ENCODE measurements at regions of chr16 and their contacts with region 1.

Region 1: DNA sequence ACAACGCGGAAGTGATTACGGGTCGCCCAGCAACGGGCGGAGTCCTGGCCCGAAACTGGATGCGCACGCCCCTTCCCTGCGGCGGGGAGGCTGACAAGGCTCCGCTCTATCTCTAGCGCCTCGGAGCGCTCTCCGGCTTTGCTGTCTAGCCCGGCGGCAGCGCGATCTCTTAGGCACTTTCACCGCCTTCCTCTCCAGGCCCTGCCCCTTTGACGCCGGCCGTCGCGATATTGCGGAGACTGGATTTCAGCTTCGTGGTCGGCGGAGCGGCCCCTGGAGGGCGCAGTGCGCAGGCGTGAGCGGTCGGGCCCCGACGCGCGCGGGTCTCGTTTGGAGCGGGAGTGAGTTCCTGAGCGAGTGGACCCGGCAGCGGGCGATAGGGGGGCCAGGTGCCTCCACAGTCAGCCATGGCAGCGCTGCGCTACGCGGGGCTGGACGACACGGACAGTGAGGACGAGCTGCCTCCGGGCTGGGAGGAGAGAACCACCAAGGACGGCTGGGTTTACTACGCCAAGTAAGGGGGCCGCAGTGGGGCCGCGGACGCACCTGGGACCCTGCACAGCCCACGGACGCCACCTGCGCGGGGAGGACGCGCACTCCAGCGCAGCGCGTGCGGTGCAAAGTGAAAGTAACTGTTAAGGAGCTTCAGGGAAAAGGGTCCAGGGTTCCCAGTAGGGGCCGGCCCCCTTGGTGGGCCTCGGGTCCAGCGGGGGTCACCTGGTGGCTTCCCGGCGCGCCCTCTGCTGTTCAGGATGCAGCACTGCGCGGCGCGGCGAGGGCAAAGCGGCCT is at the start of gene WWOX:
- DNase-seq: peak; percentile 99
- H3K4me3 ChIP-seq: peak within 1 kb of the TSS; percentile 90
- H3K27ac ChIP-seq: peak within 1 kb of the TSS; percentile 88
- H3K4me1 ChIP-seq: peaks cover 19% of the 10 kb centered on the region
- H3K27me3 ChIP-seq: no peaks in the 10 kb centered on the region
- CTCF ChIP-seq: peak; percentile 94
- total RNA-seq, gene WWOX: 79.9 and 82.6 TPM in 2 replicates

Region 2: DNA sequence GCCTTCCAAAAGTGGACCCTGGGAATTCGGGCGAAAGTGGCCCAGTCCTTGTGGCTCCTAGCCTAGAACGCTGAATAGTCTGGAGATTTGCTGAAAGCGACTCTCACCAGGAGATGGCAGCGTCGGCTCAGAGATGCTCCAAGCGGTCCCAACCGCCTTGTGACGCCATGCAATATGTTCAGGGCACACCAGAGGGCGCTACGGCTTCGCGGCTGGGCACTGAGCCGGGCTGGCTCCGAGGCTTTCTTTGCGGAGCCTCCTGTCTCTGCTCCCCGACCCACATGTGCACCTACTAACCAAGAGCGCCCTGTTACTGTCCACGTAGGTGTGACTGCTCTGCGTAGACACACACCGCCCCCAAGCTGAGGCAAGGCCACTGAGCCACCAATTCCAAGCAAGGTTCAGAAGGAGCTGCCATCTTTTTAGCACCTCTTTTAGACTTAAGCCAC is 863.5 kb before region 1 on chr16:
- CTCF ChIA-PET with region 1: no interaction called
- POLR2A ChIA-PET with region 1: no interaction called
- intact Hi-C with region 1: loop called (anchors 5 kb)
- DNase-seq: peak; percentile 88
- H3K4me3 ChIP-seq: no peak overlapping the region
- H3K27ac ChIP-seq: no peak overlapping the region
- H3K4me1 ChIP-seq: no peaks in the 10 kb centered on the region
- H3K27me3 ChIP-seq: no peaks in the 10 kb centered on the region
- CTCF ChIP-seq: peak; percentile 99

Region 3: DNA sequence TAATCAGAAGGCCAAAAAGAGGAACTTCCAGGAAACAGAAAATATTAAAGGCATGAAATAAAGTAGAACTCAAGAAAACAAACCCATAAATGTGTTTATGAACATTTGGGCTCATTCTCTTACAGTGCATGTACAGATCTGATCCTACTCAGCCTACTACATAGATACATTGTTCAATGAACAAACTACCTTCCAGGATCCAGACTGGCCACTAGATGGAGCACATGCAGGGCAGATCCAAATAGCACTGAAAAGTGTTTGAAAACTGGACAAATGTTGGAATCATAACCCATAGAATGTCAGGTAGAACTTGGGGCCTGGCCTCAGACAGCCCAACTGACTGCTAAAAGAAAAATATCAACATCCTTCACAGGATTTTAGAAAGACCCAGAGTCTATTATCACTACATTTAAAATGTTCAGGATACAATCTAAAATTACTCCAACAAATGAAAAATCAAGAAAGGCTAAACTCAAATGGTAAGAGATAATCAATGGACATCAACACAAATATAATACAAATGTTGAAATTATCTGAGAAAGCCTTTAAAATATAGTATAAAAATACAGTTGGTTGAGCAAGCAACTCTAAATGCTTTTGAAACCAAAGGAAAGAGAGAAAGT is 499.7 kb before region 1 on chr16:
- CTCF ChIA-PET with region 1: no interaction called
- POLR2A ChIA-PET with region 1: no interaction called
- intact Hi-C with region 1: loop called (anchors 10 kb)
- DNase-seq: peak; percentile 50
- H3K4me3 ChIP-seq: no peak overlapping the region
- H3K27ac ChIP-seq: no peak overlapping the region
- H3K4me1 ChIP-seq: no peaks in the 10 kb centered on the region
- H3K27me3 ChIP-seq: no peaks in the 10 kb centered on the region
- CTCF ChIP-seq: peak; percentile 75

Region 4: GRCh38 chr16:77993111-77993985 is 106.2 kb before region 1 on chr16:
- CTCF ChIA-PET with region 1: interaction called, 10 read pairs
- POLR2A ChIA-PET with region 1: no interaction called
- intact Hi-C with region 1: no loop called
- DNase-seq: peak; percentile 65
- H3K4me3 ChIP-seq: no peak overlapping the region
- H3K27ac ChIP-seq: peak overlapping the region; percentile 40
- H3K4me1 ChIP-seq: no peaks in the 10 kb centered on the region
- H3K27me3 ChIP-seq: no peaks in the 10 kb centered on the region
- CTCF ChIP-seq: no peak

Region 5: GRCh38 chr16:78002915-78003538 is 96.5 kb before region 1 on chr16:
- CTCF ChIA-PET with region 1: interaction called, 4 read pairs
- POLR2A ChIA-PET with region 1: no interaction called
- intact Hi-C with region 1: loop called (anchors 5 kb)
- DNase-seq: peak; percentile 93
- H3K4me3 ChIP-seq: no peak overlapping the region
- H3K27ac ChIP-seq: no peak overlapping the region
- H3K4me1 ChIP-seq: no peaks in the 10 kb centered on the region
- H3K27me3 ChIP-seq: no peaks in the 10 kb centered on the region
- CTCF ChIP-seq: peak; percentile 90

Region 6: GRCh38 chr16:78235168-78235800 is 135.7 kb after region 1 on chr16:
- CTCF ChIA-PET with region 1: no interaction called
- POLR2A ChIA-PET with region 1: no interaction called
- intact Hi-C with region 1: no loop called
- DNase-seq: peak; percentile 79
- H3K4me3 ChIP-seq: no peak overlapping the region
- H3K27ac ChIP-seq: no peak overlapping the region
- H3K4me1 ChIP-seq: no peaks in the 10 kb centered on the region
- H3K27me3 ChIP-seq: no peaks in the 10 kb centered on the region
- CTCF ChIP-seq: peak; percentile 78

Region 7: GRCh38 chr16:78249068-78249467 is 149.5 kb after region 1 on chr16:
- CTCF ChIA-PET with region 1: no interaction called
- POLR2A ChIA-PET with region 1: no interaction called
- intact Hi-C with region 1: no loop called
- DNase-seq: peak; percentile 25
- H3K4me3 ChIP-seq: no peak overlapping the region
- H3K27ac ChIP-seq: no peak overlapping the region
- H3K4me1 ChIP-seq: no peaks in the 10 kb centered on the region
- H3K27me3 ChIP-seq: no peaks in the 10 kb centered on the region
- CTCF ChIP-seq: no peak

Measured in A673 (cell line).